ENCODE measurements at regions of chr1 and their contacts with region 1.

Region 1: DNA sequence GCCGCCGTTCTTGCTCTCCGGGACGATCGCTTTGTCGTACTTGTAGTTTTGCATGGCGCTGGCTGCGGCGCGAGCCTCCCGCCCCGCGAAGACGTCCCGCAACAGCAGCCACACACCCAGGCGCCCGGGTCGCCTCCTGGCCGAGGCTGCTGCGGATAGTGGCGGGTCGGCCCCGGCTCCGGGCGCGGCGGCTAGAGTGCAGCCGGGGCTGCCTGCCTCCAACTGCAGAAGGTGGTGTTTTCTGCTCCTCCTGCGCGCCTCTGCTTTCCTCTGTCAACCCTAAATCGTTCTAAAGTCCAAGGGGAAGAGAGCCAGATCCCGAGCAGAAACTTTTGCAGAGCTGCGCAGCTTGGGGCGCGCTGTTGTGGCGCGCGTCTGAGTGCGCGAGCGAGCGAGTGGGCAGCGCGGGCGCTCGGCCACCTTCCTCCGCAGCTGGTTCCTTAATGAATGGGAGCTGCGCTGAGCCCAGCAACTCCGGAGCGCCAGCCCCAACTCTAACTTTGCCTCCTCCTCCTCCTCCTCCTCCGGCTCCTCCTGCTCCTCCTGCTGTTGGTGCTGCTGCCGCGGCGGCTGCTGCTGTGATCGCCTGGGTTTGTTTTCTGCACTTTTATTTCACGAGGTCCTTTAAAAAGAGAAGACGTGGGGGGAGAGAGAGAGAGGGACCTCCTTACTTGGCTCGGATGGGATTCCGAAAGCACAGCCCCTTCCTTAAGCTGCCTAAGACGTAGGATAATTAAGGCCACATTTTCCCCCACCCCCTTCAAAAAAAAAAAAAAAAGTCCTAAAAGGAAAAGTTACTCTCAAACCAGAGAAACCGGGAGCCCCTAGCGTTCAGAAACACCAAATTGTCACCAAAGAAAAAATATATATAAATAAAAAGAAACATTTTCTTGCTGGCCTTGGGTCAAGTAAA is at the start of gene PLPP3:
- DNase-seq: peak; percentile 80 to 85
- H3K4me3 ChIP-seq: peak within 1 kb of the TSS; percentile 76
- H3K4me3 Mint-ChIP-seq: peak within 1 kb of the TSS; percentile 94
- H3K27ac Mint-ChIP-seq: peak within 1 kb of the TSS; percentile 97
- H3K4me1 ChIP-seq: peaks cover 24% of the 10 kb centered on the region
- H3K4me1 Mint-ChIP-seq: peaks cover 11% of the 10 kb centered on the region
- H3K27me3 ChIP-seq: no peaks in the 10 kb centered on the region
- H3K27me3 Mint-ChIP-seq: no peaks in the 10 kb centered on the region
- CTCF ChIP-seq: peak; percentile 8 to 51
- total RNA-seq, gene PLPP3: 39.2 and 41.0 TPM in 2 replicates

Region 2: DNA sequence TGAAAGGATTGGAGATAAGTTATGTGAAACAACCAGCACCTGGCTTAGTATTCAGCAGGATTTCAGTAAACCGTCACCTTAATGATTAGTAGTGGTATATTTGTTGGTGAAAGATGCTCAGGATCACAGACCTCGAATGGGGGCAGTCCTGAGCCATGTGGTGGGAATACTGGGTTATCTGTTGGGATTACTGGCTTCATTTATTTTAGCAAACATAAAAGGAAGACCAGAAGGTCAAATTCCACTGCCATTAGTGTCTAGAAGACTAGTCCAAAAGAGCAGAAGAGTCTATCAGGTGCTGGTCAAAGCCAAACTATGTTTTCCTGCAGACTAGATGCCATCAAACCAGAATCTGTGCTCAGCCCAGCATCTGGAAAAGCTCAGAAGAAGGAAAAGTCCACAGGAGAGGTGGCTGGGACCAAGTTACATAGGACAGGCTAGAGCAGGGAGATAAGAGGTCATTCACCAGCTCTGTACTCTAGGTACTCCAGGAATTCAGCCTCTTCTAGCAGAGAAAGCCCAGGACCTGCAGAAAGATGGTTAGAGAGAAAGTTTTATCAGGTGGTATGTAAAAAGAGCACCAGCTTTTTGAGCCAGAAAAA is 343.2 kb before region 1 on chr1:
- CTCF ChIA-PET with region 1: no interaction called
- POLR2A ChIA-PET with region 1: no interaction called
- intact Hi-C with region 1: loop called (anchors 1 kb)
- DNase-seq: peak; percentile 53 to 54
- H3K4me3 ChIP-seq: no peak overlapping the region
- H3K4me3 Mint-ChIP-seq: no peak overlapping the region
- H3K27ac Mint-ChIP-seq: no peak overlapping the region
- H3K4me1 ChIP-seq: peaks cover 11% of the 10 kb centered on the region
- H3K4me1 Mint-ChIP-seq: peaks cover 17% of the 10 kb centered on the region
- H3K27me3 ChIP-seq: no peaks in the 10 kb centered on the region
- H3K27me3 Mint-ChIP-seq: no peaks in the 10 kb centered on the region
- CTCF ChIP-seq: no peak

Region 3: DNA sequence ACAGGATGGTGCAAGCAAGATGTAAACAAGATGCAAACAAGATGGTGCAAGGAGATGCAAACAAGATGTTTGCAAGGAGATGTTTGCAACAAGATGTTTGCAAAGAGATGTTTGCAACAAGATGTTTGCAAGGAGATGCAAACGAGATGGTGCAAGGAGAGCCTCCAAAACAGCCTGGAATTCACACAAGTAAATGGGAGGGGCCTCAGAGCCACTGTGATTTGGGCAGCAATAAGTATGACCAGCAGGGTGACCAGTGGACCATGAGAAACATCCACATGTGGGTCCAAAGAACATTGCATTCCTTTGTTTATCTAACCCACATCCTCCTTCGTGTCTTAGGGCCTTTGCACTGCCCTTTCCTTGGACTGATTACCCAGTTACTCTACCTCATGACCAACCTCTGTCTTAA is 162.7 kb before region 1 on chr1:
- CTCF ChIA-PET with region 1: interaction called, 7 read pairs
- POLR2A ChIA-PET with region 1: no interaction called
- intact Hi-C with region 1: loop called (anchors 2 kb)
- DNase-seq: peak; percentile 25 to 63
- H3K4me3 ChIP-seq: no peak overlapping the region
- H3K4me3 Mint-ChIP-seq: no peak overlapping the region
- H3K27ac Mint-ChIP-seq: no peak overlapping the region
- H3K4me1 ChIP-seq: peaks cover 44% of the 10 kb centered on the region
- H3K4me1 Mint-ChIP-seq: peaks cover 37% of the 10 kb centered on the region
- H3K27me3 ChIP-seq: no peaks in the 10 kb centered on the region
- H3K27me3 Mint-ChIP-seq: no peaks in the 10 kb centered on the region
- CTCF ChIP-seq: peak in 1 of 2 experiments; percentile 13

Region 4: GRCh38 chr1:56477164-56478111 is 101.8 kb before region 1 on chr1:
- CTCF ChIA-PET with region 1: interaction called, 3 read pairs
- POLR2A ChIA-PET with region 1: no interaction called
- intact Hi-C with region 1: loop called (anchors 2 kb)
- DNase-seq: peak; percentile 69 to 77
- H3K4me3 ChIP-seq: peak overlapping the region; percentile 47
- H3K4me3 Mint-ChIP-seq: peak overlapping the region; percentile 78
- H3K27ac Mint-ChIP-seq: peak overlapping the region; percentile 91
- H3K4me1 ChIP-seq: peaks cover 30% of the 10 kb centered on the region
- H3K4me1 Mint-ChIP-seq: peaks cover 18% of the 10 kb centered on the region
- H3K27me3 ChIP-seq: no peaks in the 10 kb centered on the region
- H3K27me3 Mint-ChIP-seq: no peaks in the 10 kb centered on the region
- CTCF ChIP-seq: no peak

Region 5: GRCh38 chr1:56535939-56536338 is 43.3 kb before region 1 on chr1:
- CTCF ChIA-PET with region 1: no interaction called
- POLR2A ChIA-PET with region 1: no interaction called
- intact Hi-C with region 1: loop called (anchors 5 kb)
- DNase-seq: peak; percentile 57 to 58
- H3K4me3 ChIP-seq: no peak overlapping the region
- H3K4me3 Mint-ChIP-seq: peak overlapping the region; percentile 24
- H3K27ac Mint-ChIP-seq: no peak overlapping the region
- H3K4me1 ChIP-seq: peaks cover 31% of the 10 kb centered on the region
- H3K4me1 Mint-ChIP-seq: peaks cover 15% of the 10 kb centered on the region
- H3K27me3 ChIP-seq: no peaks in the 10 kb centered on the region
- H3K27me3 Mint-ChIP-seq: no peaks in the 10 kb centered on the region
- CTCF ChIP-seq: no peak